ENCODE measurements at regions of chr10 and their contacts with region 1.

Region 1: GRCh38 chr10:24201503-24202180 is 7.3 kb upstream of the KIAA1217 start:
- DNase-seq: no peak
- ATAC-seq: no peak
- H3K4me3 ChIP-seq: no peak overlapping the region
- H3K4me3 Mint-ChIP-seq: no peak overlapping the region
- H3K27ac ChIP-seq: no peak overlapping the region
- H3K27ac Mint-ChIP-seq: no peak overlapping the region
- H3K4me1 ChIP-seq: no peaks in the 10 kb centered on the region
- H3K4me1 Mint-ChIP-seq: no peaks in the 10 kb centered on the region
- H3K27me3 ChIP-seq: no peaks in the 10 kb centered on the region
- H3K27me3 Mint-ChIP-seq: peaks cover 8 to 24% (median 16%) of the 10 kb centered on the region in 5 donors

Region 2: GRCh38 chr10:23314835-23315239 is 886.8 kb before region 1 on chr10:
- CTCF ChIA-PET with region 1: no interaction called
- POLR2A ChIA-PET with region 1: no interaction called
- intact Hi-C with region 1: loop called in 1 of 2 experiments (anchors 1 kb)
- DNase-seq: peak in 7 of 9 donors; percentile 44 to 73 (median 70)
- ATAC-seq: peak; percentile 73
- H3K4me3 ChIP-seq: no peak overlapping the region
- H3K4me3 Mint-ChIP-seq: no peak overlapping the region
- H3K27ac ChIP-seq: no peak overlapping the region
- H3K27ac Mint-ChIP-seq: no peak overlapping the region
- H3K4me1 ChIP-seq: no peaks in the 10 kb centered on the region
- H3K4me1 Mint-ChIP-seq: peaks cover 0 to 5% (median 0%) of the 10 kb centered on the region in 7 donors
- H3K27me3 ChIP-seq: no peaks in the 10 kb centered on the region
- H3K27me3 Mint-ChIP-seq: peaks cover 0 to 6% (median 0%) of the 10 kb centered on the region in 5 donors

Region 3: GRCh38 chr10:23702977-23703414 is 498.6 kb before region 1 on chr10:
- CTCF ChIA-PET with region 1: no interaction called
- POLR2A ChIA-PET with region 1: no interaction called
- intact Hi-C with region 1: loop called in 1 of 2 experiments (anchors 1 kb)
- DNase-seq: peak in 7 of 9 donors; percentile 39 to 68 (median 61)
- ATAC-seq: peak; percentile 78
- H3K4me3 ChIP-seq: no peak overlapping the region
- H3K4me3 Mint-ChIP-seq: peak overlapping the region in 8 of 10 donors; percentile 7 to 62 (median 50)
- H3K27ac ChIP-seq: no peak overlapping the region
- H3K27ac Mint-ChIP-seq: peak overlapping the region in 1 of 9 donors; percentile 47
- H3K4me1 ChIP-seq: no peaks in the 10 kb centered on the region
- H3K4me1 Mint-ChIP-seq: peaks cover 3 to 15% (median 12%) of the 10 kb centered on the region in 7 donors
- H3K27me3 ChIP-seq: peaks cover 0 to 4% of the 10 kb centered on the region in 2 donors
- H3K27me3 Mint-ChIP-seq: peaks cover 22 to 40% (median 26%) of the 10 kb centered on the region in 5 donors

Region 4: DNA sequence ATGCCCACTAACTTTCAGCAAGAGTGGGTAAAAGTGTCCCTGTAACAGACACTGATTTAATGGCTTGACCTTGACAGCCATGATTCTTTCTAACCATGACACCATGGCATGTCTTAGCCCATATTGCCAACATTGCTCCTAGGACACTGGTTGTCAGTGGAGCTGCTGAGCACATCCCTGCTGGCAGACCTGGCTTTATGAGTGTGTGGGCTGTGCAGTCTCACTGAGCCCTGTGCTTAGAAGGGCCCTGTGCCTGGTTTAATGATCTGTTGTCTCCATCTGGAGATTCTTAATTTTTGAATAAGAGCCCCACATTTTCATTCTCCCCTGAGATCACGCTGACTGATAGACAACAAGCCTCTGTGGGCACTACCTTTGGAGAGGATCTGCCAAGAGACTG is 235.8 kb before region 1 on chr10:
- CTCF ChIA-PET with region 1: no interaction called
- POLR2A ChIA-PET with region 1: no interaction called
- intact Hi-C with region 1: no loop called
- DNase-seq: no peak
- ATAC-seq: no peak
- H3K4me3 ChIP-seq: no peak overlapping the region
- H3K4me3 Mint-ChIP-seq: no peak overlapping the region
- H3K27ac ChIP-seq: no peak overlapping the region
- H3K27ac Mint-ChIP-seq: no peak overlapping the region
- H3K4me1 ChIP-seq: no peaks in the 10 kb centered on the region
- H3K4me1 Mint-ChIP-seq: no peaks in the 10 kb centered on the region
- H3K27me3 ChIP-seq: no peaks in the 10 kb centered on the region
- H3K27me3 Mint-ChIP-seq: peaks cover 0 to 4% (median 0%) of the 10 kb centered on the region in 5 donors

Region 5: DNA sequence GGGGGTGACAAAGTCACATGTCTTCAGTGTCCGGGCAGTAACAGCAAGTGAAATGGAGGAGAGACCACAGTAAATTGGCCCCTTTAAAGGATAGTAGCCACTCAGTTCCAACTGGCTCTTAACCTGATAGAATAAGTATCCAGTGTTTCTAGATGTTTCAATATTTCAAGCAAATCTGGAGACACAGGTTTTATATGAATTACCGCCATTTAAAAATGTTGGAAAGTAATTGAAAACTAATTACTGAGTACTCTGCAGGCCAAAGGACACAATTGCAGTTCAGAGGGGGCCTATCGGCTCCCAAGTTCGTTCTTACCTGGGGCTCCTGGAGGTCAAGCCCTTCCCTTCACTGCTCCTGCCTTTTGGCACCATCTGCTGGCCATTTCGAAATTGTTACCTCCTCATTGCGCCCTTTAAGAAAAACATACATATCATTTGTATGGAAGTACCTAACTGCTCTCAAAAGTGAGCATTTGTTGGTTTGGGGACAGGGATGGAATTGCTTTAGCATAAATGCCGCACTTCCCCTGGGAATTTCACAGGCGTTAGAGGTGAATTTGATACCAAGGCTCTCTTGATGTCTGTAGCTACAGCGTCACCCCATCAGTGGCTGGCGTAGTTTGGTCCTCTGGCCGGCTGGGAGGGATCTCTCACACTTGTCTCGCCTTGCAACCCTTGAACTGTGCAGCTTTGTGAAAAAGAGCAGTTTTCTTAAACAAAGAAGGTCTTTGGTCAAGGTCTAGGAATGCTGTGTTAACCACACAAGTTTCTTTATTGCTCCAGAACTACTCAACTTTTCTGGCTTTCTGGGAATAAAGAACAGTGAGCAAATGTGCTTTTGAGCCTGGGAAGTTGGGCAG is 302.0 kb after region 1 on chr10:
- CTCF ChIA-PET with region 1: no interaction called
- POLR2A ChIA-PET with region 1: no interaction called
- intact Hi-C with region 1: loop called in 1 of 2 experiments (anchors 5 kb)
- DNase-seq: peak in 1 of 9 donors; percentile 32
- ATAC-seq: no peak
- H3K4me3 ChIP-seq: no peak overlapping the region
- H3K4me3 Mint-ChIP-seq: no peak overlapping the region
- H3K27ac ChIP-seq: no peak overlapping the region
- H3K27ac Mint-ChIP-seq: no peak overlapping the region
- H3K4me1 ChIP-seq: no peaks in the 10 kb centered on the region
- H3K4me1 Mint-ChIP-seq: no peaks in the 10 kb centered on the region
- H3K27me3 ChIP-seq: no peaks in the 10 kb centered on the region
- H3K27me3 Mint-ChIP-seq: peaks cover 7 to 23% (median 19%) of the 10 kb centered on the region in 5 donors

Region 6: GRCh38 chr10:24556750-24557742 is 355.4 kb after region 1 on chr10:
- CTCF ChIA-PET with region 1: no interaction called
- POLR2A ChIA-PET with region 1: no interaction called
- intact Hi-C with region 1: loop called in 1 of 2 experiments (anchors 2 kb)
- DNase-seq: peak in 7 of 9 donors; percentile 8 to 59 (median 39)
- ATAC-seq: peak; percentile 46
- H3K4me3 ChIP-seq: no peak overlapping the region
- H3K4me3 Mint-ChIP-seq: no peak overlapping the region
- H3K27ac ChIP-seq: no peak overlapping the region
- H3K27ac Mint-ChIP-seq: peak overlapping the region in 2 of 9 donors; percentile 19 to 75
- H3K4me1 ChIP-seq: no peaks in the 10 kb centered on the region
- H3K4me1 Mint-ChIP-seq: peaks cover 4 to 7% (median 7%) of the 10 kb centered on the region in 7 donors
- H3K27me3 ChIP-seq: no peaks in the 10 kb centered on the region
- H3K27me3 Mint-ChIP-seq: no peaks in the 10 kb centered on the region